ENCODE measurements at regions of chr2 and their contacts with region 1.

Region 1: GRCh38 chr2:221573430-221574230 is 1.5 kb upstream of the EPHA4 start:
- DNase-seq: peak; percentile 55 to 88 (median 74)
- ATAC-seq: peak; percentile 31
- H3K4me3 ChIP-seq: peak overlapping the region; percentile 84
- H3K4me3 Mint-ChIP-seq: peak overlapping the region; percentile 89
- H3K27ac ChIP-seq: no peak overlapping the region
- H3K27ac Mint-ChIP-seq: peak overlapping the region; percentile 28
- H3K4me1 ChIP-seq: peaks cover 47% of the 10 kb centered on the region
- H3K4me1 Mint-ChIP-seq: peaks cover 31% of the 10 kb centered on the region
- H3K27me3 ChIP-seq: peaks cover 13 to 64% of the 10 kb centered on the region in 2 experiments
- H3K27me3 Mint-ChIP-seq: peaks cover 52% of the 10 kb centered on the region
- CTCF ChIP-seq: peak; percentile 99

Region 2: DNA sequence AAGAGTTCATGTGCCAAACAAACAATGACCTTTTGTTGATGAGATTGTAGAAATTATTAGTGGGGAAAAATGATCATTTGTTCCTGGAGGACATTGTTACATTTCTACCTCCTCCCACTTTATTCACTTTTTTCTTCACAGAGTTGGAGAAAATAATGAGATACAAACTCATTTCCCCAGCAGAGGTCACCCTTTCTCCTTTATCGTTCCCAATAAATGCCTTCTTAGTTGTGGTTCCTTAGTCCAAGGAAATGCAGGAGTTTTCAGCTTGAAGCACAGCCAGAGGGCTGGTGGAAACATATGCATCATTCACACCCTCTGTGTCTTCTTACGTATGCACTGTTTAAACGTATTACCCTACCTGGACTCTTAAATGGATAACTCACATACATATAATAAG is 1837.4 kb before region 1 on chr2:
- CTCF ChIA-PET with region 1: no interaction called
- POLR2A ChIA-PET with region 1: no interaction called
- intact Hi-C with region 1: loop called in 1 of 2 experiments (anchors 5 kb)
- DNase-seq: peak in 2 of 14 experiments; percentile 16 to 24
- ATAC-seq: no peak
- H3K4me3 ChIP-seq: no peak overlapping the region
- H3K4me3 Mint-ChIP-seq: no peak overlapping the region
- H3K27ac ChIP-seq: no peak overlapping the region
- H3K27ac Mint-ChIP-seq: no peak overlapping the region
- H3K4me1 ChIP-seq: no peaks in the 10 kb centered on the region
- H3K4me1 Mint-ChIP-seq: no peaks in the 10 kb centered on the region
- H3K27me3 ChIP-seq: peaks cover 0 to 7% of the 10 kb centered on the region in 2 experiments
- H3K27me3 Mint-ChIP-seq: peaks cover 45% of the 10 kb centered on the region
- CTCF ChIP-seq: peak; percentile 34

Region 3: DNA sequence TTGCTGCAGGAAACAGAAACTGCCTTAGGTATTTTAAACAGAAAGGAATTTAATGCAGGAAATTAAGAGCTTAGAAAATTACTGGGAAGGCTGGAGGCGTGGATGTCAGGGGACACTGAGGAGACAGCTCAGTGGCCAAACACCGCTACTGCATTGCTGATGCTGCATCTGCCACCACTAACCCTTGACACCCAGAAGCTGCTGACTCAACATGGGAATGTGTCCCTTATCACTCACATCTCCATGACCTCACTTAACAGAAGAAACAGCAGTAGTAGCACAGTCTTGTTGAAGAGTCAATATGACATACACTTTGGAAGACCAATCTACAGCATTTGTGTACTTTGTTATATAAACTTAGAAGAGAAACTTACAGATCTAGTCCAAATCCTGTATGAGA is 1040.1 kb before region 1 on chr2:
- CTCF ChIA-PET with region 1: no interaction called
- POLR2A ChIA-PET with region 1: no interaction called
- intact Hi-C with region 1: no loop called
- DNase-seq: no peak
- ATAC-seq: no peak
- H3K4me3 ChIP-seq: no peak overlapping the region
- H3K4me3 Mint-ChIP-seq: no peak overlapping the region
- H3K27ac ChIP-seq: no peak overlapping the region
- H3K27ac Mint-ChIP-seq: no peak overlapping the region
- H3K4me1 ChIP-seq: no peaks in the 10 kb centered on the region
- H3K4me1 Mint-ChIP-seq: no peaks in the 10 kb centered on the region
- H3K27me3 ChIP-seq: no peaks in the 10 kb centered on the region
- H3K27me3 Mint-ChIP-seq: no peaks in the 10 kb centered on the region
- CTCF ChIP-seq: no peak

Region 4: DNA sequence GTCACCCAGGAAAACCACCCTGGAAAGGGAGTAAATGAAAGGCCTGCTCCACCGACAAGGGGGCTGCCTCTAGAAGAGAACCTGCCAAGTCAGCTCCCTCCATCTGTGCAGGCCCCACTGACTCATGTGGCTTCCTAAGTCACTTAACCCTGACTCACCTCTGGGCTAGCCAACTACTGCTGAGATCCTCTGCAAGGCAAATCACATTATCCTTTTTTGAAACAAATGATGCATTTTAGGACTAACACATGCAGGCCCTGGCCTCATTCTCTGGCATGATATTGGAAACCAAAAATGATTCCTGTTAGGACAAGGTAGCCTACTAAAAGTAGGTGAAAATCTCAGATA is 476.1 kb before region 1 on chr2:
- CTCF ChIA-PET with region 1: no interaction called
- POLR2A ChIA-PET with region 1: no interaction called
- intact Hi-C with region 1: loop called in 1 of 2 experiments (anchors 10 kb)
- DNase-seq: no peak
- ATAC-seq: no peak
- H3K4me3 ChIP-seq: no peak overlapping the region
- H3K4me3 Mint-ChIP-seq: no peak overlapping the region
- H3K27ac ChIP-seq: no peak overlapping the region
- H3K27ac Mint-ChIP-seq: no peak overlapping the region
- H3K4me1 ChIP-seq: no peaks in the 10 kb centered on the region
- H3K4me1 Mint-ChIP-seq: no peaks in the 10 kb centered on the region
- H3K27me3 ChIP-seq: no peaks in the 10 kb centered on the region
- H3K27me3 Mint-ChIP-seq: peaks cover 4% of the 10 kb centered on the region
- CTCF ChIP-seq: no peak

Region 5: DNA sequence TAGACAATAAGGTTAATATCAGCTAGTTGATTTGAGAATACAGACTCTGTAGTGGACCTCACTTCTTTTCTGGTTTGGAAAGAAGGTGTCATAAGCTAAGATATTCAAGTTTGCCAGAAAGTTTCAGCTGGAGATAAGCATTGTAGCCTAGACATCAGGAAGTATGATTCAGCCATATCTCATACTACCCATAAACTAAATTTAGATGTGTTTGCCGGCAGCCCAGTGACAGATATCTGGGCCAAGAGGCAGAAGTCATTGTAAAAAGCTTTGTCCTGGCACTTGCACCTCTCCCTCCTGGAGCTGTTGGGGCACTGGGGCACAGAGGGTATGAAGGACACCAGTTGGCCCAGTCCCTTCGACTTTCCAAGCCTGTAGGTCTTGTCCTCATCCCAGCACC is 129.5 kb before region 1 on chr2:
- CTCF ChIA-PET with region 1: interaction called, 6 read pairs
- POLR2A ChIA-PET with region 1: no interaction called
- intact Hi-C with region 1: loop called in 1 of 2 experiments (anchors 5 kb)
- DNase-seq: no peak
- ATAC-seq: no peak
- H3K4me3 ChIP-seq: no peak overlapping the region
- H3K4me3 Mint-ChIP-seq: no peak overlapping the region
- H3K27ac ChIP-seq: no peak overlapping the region
- H3K27ac Mint-ChIP-seq: no peak overlapping the region
- H3K4me1 ChIP-seq: no peaks in the 10 kb centered on the region
- H3K4me1 Mint-ChIP-seq: no peaks in the 10 kb centered on the region
- H3K27me3 ChIP-seq: no peaks in the 10 kb centered on the region
- H3K27me3 Mint-ChIP-seq: no peaks in the 10 kb centered on the region
- CTCF ChIP-seq: no peak

Region 6: GRCh38 chr2:221517696-221518151 is 55.9 kb before region 1 on chr2:
- CTCF ChIA-PET with region 1: interaction called, 28 read pairs
- POLR2A ChIA-PET with region 1: interaction called, 106 read pairs
- intact Hi-C with region 1: loop called in 1 of 2 experiments (anchors 1 kb)
- DNase-seq: peak; percentile 57 to 92 (median 74)
- ATAC-seq: peak; percentile 65
- H3K4me3 ChIP-seq: peak overlapping the region; percentile 45
- H3K4me3 Mint-ChIP-seq: no peak overlapping the region
- H3K27ac ChIP-seq: peak overlapping the region; percentile 87 to 92
- H3K27ac Mint-ChIP-seq: no peak overlapping the region
- H3K4me1 ChIP-seq: peaks cover 60% of the 10 kb centered on the region
- H3K4me1 Mint-ChIP-seq: peaks cover 5% of the 10 kb centered on the region
- H3K27me3 ChIP-seq: no peaks in the 10 kb centered on the region
- H3K27me3 Mint-ChIP-seq: no peaks in the 10 kb centered on the region
- CTCF ChIP-seq: no peak

Region 7: DNA sequence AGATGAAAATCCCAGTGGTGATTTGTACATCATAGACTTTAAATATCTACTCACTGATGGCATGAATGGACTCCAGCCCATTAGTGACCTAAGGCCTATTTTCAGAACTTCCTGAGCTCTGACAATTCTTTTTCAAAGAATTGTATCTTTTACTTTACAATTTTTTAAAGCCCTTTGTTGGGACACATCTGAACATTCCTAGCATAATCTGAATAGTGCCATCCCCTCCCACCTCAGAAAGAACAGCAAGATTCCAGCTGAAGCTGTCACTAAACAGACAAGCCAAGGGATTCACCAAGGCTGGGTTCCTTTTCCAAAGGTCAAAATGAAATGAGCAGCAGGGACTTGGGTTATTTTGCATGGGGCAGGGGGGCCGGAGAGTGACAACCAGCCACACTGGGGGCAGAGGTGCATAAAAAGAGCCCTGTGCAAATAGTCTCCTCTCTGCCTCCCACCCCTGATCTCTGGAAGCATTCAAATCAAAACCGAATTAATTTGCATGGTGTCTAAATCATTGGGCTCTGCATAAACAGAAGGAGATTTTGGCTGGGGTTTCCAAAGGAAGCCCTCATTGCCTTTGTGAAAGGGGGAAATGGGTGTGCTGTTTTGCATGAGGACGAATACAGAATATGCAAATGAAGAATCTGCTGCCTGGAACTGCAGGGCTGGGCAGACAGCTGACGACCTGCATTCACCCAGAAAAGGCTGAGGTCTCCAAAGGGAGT is 18.7 kb before region 1 on chr2:
- CTCF ChIA-PET with region 1: interaction called, 7 read pairs
- POLR2A ChIA-PET with region 1: interaction called, 3 read pairs
- intact Hi-C with region 1: loop called in 1 of 2 experiments (anchors 2 kb)
- DNase-seq: peak in 3 of 14 experiments; percentile 23 to 35 (median 28)
- ATAC-seq: peak; percentile 48
- H3K4me3 ChIP-seq: no peak overlapping the region
- H3K4me3 Mint-ChIP-seq: peak overlapping the region; percentile 49
- H3K27ac ChIP-seq: no peak overlapping the region
- H3K27ac Mint-ChIP-seq: peak overlapping the region; percentile 52
- H3K4me1 ChIP-seq: peaks cover 13% of the 10 kb centered on the region
- H3K4me1 Mint-ChIP-seq: peaks cover 70% of the 10 kb centered on the region
- H3K27me3 ChIP-seq: no peaks in the 10 kb centered on the region
- H3K27me3 Mint-ChIP-seq: no peaks in the 10 kb centered on the region
- CTCF ChIP-seq: no peak

Measured in CD4-positive, alpha-beta T cell (primary cell).